ENCODE measurements at regions of chr16 and their contacts with region 1.

Region 1: DNA sequence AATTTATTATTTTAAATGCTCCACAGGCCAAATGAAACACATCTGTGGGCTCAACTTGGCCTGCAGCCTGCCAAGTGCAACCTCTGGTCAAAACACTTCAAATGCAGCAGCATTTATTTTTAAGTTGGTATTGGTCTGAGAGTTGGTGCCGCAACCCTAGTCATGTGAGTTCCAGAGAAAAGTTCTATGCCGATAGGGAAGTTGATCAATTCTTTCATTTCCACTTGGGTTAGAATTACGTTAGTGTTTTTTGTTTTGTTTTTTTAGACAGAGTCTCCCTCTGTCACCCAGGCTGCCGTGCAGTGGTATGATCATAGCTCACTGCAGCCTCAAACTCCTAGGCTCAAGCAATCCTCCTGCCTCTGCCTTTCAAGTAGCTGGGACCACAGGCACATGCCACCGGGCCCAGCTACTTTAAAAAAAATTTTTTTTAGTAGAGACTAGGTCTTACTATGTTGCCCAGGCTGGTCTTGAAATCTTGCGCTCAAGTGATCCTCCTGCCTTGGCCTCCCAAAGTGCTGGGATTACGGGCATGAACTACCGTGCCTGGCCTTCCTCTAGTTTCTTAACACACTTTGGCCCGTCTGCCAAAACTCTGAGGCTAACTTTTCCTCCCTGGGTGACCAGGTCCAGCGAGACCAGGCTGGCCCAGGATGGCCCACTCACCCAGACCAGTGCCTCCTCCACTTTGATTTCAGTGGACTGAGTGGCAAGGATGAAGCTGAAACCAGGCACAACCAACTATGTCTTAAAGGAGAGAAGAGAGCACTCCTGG is 221.1 kb downstream of the MRTFB start:
- DNase-seq: no peak
- ATAC-seq: no peak
- H3K4me3 ChIP-seq: no peak overlapping the region
- H3K27ac ChIP-seq: no peak overlapping the region
- H3K4me1 ChIP-seq: no peaks in the 10 kb centered on the region
- H3K27me3 ChIP-seq: no peaks in the 10 kb centered on the region
- CTCF ChIP-seq: no peak

Region 2: DNA sequence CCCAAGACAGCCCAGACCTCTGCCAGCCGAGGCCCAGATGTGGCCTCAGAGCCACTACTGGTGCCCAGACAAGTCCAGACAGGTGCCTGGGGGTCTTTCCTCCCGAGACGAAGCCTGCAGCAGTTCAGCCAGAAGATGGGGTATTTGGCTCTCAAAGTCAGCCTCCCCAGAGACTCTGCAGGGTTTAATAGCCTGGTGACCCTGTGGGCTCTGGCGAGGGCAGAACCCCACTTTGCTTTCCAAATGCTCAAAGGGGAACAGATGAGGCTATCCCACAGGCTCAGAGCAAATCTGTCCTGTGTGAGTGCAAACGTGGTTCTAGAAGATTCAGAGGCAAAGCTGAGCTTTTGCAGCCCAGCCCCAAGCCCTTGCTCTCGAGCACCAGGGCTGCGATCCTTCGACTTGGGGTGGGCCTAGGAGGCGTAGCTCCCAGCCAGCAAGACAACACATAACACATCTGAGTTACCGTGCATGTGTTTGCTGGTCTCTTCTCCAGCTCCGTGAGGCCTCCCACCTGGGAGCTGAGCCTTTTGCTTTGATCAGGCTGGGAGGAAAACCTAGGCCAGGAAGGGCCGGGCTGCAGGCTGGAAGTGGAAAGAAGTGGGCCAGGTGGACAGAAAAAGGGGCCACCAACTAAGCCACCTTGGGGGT is 14.9 kb after region 1 on chr16:
- CTCF ChIA-PET with region 1: interaction called, 10 read pairs
- POLR2A ChIA-PET with region 1: no interaction called
- in situ Hi-C with region 1: no loop called
- intact Hi-C with region 1: no loop called
- DNase-seq: no peak
- ATAC-seq: peak; percentile 22
- H3K4me3 ChIP-seq: peak overlapping the region; percentile 65 to 98
- H3K27ac ChIP-seq: peak overlapping the region; percentile 93
- H3K4me1 ChIP-seq: peaks cover 64% of the 10 kb centered on the region
- H3K27me3 ChIP-seq: no peaks in the 10 kb centered on the region
- CTCF ChIP-seq: no peak

Region 3: GRCh38 chr16:14559809-14560241 is 267.6 kb after region 1 on chr16:
- CTCF ChIA-PET with region 1: interaction called, 12 read pairs
- POLR2A ChIA-PET with region 1: no interaction called
- in situ Hi-C with region 1: no loop called
- intact Hi-C with region 1: no loop called
- DNase-seq: no peak
- ATAC-seq: no peak
- H3K4me3 ChIP-seq: no peak overlapping the region
- H3K27ac ChIP-seq: no peak overlapping the region
- H3K4me1 ChIP-seq: 0 out of 2 replicates have a peak, but pooled peaks cover 3% of the 10 kb centered on the region
- H3K27me3 ChIP-seq: no peaks in the 10 kb centered on the region
- CTCF ChIP-seq: no peak